ENCODE measurements at regions of chr2 and their contacts with region 1.

Region 1: GRCh38 chr2:42494355-42495233 is 812 bp upstream of the KCNG3 start:
- DNase-seq: peak; percentile 55 to 90 (median 76)

Region 2: DNA sequence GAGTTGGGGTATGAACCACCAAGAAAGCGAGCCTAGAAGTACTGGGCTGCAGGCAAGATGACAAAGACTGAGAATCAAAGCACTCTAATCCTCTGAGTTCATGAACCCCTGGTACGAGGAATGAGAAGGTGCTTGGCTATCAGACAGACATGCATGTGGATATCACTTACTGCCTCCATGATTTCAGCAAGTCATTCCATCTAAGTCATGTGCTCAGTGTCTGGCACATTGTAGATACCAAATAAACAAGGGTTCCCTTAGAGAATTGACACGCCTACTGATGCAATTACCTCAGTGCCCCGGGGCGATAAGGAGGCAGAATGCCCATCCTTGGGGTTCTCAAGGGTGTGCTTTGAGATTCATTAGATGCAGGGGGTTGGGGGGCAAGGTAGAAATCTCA is 572.4 kb before region 1 on chr2:
- intact Hi-C with region 1: no loop called
- DNase-seq: no peak

Region 3: GRCh38 chr2:41994207-41994606 is 500.4 kb before region 1 on chr2:
- intact Hi-C with region 1: no loop called
- DNase-seq: no peak

Region 4: DNA sequence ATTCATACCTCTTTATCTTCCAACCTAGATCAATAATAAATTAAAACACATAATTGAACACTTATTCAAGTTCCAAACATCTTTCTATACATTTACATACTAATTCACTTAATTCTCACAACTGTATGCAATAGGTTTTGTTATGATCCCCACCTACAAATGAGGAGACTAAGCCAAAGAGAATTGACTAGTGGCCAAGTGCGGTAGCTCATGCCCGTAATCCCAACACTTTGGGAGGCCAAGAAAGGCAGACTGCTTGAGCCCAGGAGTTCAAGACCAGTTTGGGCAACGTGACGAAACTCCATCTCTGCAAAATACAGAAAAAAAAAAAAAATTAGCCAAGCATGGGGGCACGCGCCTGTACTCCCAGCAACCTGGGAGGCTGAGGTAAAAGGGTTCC is 37.6 kb before region 1 on chr2:
- intact Hi-C with region 1: no loop called
- DNase-seq: peak in 1 of 42 donors; percentile 19

Region 5: GRCh38 chr2:42554392-42554791 is 59.8 kb after region 1 on chr2:
- intact Hi-C with region 1: no loop called
- DNase-seq: no peak

Region 6: DNA sequence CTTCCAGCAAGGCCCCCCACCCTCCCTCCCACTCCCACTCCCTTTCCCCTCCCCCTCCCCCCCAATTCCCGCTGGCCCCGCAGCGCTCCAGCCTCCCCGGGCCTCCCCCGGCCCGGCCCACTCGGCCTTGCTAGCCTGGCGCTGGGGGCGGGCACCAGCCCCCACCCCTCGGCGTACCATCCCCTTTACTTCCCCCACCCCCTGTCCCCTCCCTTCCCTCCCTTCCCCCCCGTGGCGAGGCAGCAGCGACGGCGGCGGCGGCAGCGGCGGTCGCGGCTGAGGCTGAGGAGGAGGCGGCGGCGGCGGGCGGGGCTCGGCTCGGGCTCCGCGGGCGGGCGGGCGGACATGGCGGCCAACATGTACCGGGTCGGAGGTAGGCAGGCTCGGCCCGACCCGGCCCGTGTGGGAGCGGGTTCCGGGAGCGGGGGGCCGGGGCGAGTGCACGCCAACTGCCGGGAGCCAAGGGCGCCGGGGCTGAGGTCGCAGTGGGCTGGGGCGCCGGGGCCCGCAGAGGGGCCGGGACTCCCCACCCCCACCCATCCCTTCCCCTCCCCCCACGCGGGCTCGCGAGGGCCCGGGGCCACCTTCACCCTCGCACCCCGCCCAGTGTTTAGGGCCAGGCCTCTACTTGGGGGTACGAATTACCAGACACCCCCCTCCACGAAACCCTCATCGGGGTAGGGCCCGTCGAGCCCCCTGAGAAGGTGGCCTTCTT is 74.0 kb after region 1 on chr2 and contains the start of gene MTA3:
- intact Hi-C with region 1: loop called (anchors 10 kb)
- DNase-seq: peak in 41 of 42 donors; percentile 36 to 86 (median 74)

Region 7: GRCh38 chr2:42663106-42663780 is 168.6 kb after region 1 on chr2:
- intact Hi-C with region 1: loop called (anchors 10 kb)
- DNase-seq: peak; percentile 38 to 87 (median 68)

Measured in head of caudate nucleus (tissue), 42 donors.